Heart left ventricle (tissue), 16 donors: ENCODE measurements at regions of chr5 and their contacts with region 1.

Region 1: DNA sequence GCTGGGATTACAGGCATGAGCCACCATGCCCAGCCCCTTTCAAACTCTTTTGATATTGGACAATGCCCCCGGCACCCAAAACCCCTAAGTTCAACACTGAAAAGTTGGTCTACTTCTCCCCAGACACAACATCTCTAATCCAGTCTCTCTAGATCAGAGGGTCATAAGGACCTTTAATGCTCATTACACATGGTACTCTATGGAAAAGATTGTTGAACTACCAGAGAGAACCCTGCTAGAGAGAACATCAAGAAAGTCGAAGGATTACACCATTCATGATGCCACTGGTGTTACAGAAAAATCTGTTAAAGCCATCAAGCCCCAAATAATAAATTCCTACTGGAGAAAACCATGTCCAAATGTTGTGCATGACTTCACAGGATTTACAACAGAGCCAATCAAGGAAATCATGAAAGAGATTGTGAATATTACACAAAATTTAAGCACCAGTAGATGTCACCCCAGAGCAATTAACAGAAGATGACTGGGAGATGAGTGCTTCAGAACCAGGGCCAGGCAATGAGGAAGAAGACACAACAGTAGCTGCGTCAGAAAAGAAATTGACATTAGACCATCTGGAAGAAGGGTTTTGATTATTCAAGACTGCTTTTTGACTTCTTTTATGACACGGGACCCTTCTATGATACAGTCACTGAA is 28.3 kb upstream of the NIPAL4 start:
- DNase-seq: peak in 2 of 5 donors; percentile 24 to 30
- ATAC-seq: peak in 3 of 4 donors; percentile 63 to 87 (median 80)
- H3K4me3 ChIP-seq: no peak overlapping the region
- H3K27ac ChIP-seq: no peak overlapping the region
- H3K4me1 ChIP-seq: peaks cover 0 to 5% (median 0%) of the 10 kb centered on the region in 12 donors
- H3K27me3 ChIP-seq: no peaks in the 10 kb centered on the region
- CTCF ChIP-seq: peak; percentile 41 to 76 (median 60)
- POLR2A ChIP-seq: no peak

Region 2: GRCh38 chr5:157471709-157472108 is 40.0 kb after region 1 on chr5:
- intact Hi-C with region 1: loop called (anchors 2 to 5 kb)
- DNase-seq: no peak
- ATAC-seq: peak in 1 of 4 donors; percentile 10
- H3K4me3 ChIP-seq: no peak overlapping the region
- H3K27ac ChIP-seq: no peak overlapping the region
- H3K4me1 ChIP-seq: peaks cover 0 to 31% (median 15%) of the 10 kb centered on the region in 12 donors
- H3K27me3 ChIP-seq: no peaks in the 10 kb centered on the region
- CTCF ChIP-seq: peak in 11 of 12 donors; percentile 25 to 60 (median 41)
- POLR2A ChIP-seq: no peak

Region 3: GRCh38 chr5:157476702-157477408 is 45.2 kb after region 1 on chr5:
- intact Hi-C with region 1: loop called (anchors 2 to 5 kb)
- DNase-seq: no peak
- ATAC-seq: peak in 3 of 4 donors; percentile 35 to 72 (median 38)
- H3K4me3 ChIP-seq: no peak overlapping the region
- H3K27ac ChIP-seq: peak overlapping the region in 1 of 12 donors; percentile 77
- H3K4me1 ChIP-seq: peaks cover 0 to 34% (median 13%) of the 10 kb centered on the region in 12 donors
- H3K27me3 ChIP-seq: no peaks in the 10 kb centered on the region
- CTCF ChIP-seq: peak; percentile 58 to 76 (median 66)
- POLR2A ChIP-seq: no peak